Activated naive CD8-positive, alpha-beta T cell treated with anti-CD3 and anti-CD28 coated beads, Interleukin-2, amount 10 ng/mL, durations not matched to agents 7 days and 5 days (primary cell): ENCODE measurements at regions of chr1 and their contacts with region 1.

Region 1: DNA sequence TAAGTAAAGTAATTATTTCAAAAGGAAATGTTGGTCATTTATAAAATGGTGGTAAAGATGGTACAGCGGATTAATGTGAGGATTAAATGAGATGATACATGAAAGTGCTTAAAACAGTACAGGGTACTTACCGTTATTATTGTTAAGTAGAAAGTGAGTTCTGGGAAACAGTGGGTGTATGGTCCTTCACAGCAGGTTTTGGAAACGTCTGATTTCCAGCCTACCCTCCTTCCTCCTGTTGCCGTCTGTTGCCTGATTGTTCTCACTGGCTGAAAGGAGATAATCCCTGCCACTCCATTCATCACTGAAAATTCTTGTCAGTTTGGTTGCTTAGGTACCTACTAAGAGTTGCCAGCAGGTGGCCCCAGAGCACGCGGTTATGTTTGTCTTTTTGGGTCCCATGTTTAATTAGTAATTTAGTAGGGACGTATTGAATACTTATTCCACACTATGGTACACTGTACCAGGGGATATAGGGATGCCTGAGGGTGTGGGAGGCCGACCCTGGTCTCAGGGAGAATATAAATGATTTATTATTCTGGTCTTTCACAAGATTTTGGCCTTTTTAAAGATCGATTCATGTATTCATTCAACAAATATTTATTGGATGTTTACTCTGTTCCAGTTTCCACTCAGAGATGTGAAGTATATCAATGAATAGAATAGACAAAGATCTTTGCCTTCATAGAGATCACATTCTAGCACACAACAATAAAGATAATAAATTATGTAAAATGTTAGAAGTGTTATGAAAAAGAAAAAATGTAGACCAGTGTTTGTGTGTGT is 30.8 kb upstream of the RPTN start:
- DNase-seq: peak; percentile 67
- ATAC-seq: peak; percentile 47
- H3K4me3 Mint-ChIP-seq: peak overlapping the region; percentile 81
- H3K27ac Mint-ChIP-seq: no peak overlapping the region
- H3K4me1 Mint-ChIP-seq: peaks cover 11% of the 10 kb centered on the region
- H3K27me3 Mint-ChIP-seq: peaks cover 3% of the 10 kb centered on the region

Region 2: DNA sequence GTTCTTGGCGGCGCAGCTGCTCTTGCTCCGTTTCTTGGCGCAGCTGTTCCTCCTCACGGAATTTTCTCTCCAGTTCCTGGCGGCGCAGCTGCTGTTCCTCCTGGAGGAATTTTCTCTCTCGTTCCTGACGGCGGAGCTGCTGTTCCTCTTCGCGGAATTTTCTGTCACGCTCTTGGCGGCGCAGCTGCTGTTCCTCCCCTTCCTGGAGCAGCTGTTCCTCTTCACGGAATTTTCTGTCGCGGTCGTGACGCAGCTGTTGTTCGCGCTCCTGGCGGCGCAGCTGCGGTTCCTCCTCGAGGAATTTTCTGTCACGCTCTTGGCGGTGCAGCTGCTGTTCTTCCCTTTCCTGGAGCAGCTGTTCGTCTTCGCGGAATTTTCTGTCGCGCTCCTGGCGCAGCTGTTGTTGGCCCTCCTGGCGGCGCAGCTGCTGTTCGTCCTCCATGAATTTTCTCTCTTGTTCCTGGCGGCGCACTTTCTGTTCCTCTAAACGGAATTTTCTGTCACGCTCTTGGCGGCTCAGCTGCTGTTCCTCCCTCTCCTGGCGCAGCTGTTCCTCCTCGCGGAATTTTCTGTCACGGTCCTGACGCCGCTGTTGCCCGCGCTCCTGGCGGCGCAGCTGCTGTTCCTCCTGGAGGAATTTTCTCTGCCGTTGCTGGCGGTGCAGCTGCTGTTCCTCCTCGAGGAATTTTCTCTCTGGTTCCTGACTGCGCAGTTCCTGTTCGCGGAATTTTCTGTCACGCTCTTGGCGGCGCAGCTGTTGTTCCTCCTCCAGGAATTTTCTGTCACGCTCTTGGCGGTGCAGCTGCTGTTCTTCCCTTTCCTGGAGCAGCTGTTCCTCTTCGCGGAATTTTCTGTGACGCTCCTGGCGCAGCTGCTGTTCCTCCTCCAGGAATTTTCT is 81.6 kb before region 1 on chr1:
- POLR2A ChIA-PET with region 1: no interaction called
- DNase-seq: peak; percentile 29
- ATAC-seq: no peak
- H3K4me3 Mint-ChIP-seq: no peak overlapping the region
- H3K27ac Mint-ChIP-seq: peak overlapping the region; percentile 72
- H3K4me1 Mint-ChIP-seq: no peaks in the 10 kb centered on the region
- H3K27me3 Mint-ChIP-seq: peaks cover 19% of the 10 kb centered on the region

Region 3: DNA sequence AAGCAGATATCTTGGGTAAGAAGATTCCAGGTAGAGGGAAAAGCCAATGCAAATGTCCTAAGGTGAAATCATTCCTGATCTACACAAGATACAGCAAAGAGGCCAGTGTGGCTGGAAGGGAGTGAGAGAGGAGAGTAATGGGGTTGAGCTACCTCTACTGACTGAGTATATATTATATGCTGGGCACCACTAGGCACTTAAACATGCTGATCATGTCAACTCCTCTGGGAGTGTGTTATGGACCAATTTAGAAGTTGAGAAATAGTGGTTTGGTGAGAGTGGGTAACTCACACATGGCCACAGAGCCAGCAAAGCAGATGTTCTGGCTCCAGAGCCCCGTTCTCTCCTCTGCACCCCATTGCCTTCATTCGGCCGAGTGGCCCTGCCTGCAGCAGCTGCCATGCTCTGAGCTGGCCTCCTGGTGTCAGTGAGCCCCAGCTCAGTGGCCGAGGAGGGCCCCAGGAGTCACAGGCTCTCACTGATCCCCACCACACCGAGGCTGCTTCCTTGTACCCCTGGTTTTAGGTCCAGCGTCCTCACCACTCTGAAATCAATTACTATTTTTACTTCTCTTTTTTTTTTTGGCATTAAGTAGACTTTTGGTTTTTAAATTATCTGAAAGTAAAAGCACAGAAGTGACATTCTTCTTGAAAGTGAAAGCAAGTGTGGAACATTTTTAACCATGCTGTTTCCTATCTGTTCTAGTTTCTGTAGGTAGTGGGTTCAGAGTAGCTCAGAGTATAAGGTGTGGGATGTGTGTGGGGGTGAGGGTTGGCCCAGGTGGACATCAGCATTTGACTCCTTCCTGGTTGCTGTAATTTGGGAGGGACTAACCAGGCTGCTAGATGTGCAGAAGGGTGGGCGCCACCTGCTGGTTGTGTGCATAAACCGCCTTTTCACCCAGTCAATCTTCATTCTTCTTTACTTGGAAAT is 270.0 kb after region 1 on chr1:
- POLR2A ChIA-PET with region 1: interaction called, 22 read pairs
- DNase-seq: peak; percentile 80
- ATAC-seq: peak; percentile 80
- H3K4me3 Mint-ChIP-seq: peak overlapping the region; percentile 65
- H3K27ac Mint-ChIP-seq: peak overlapping the region; percentile 91
- H3K4me1 Mint-ChIP-seq: peaks cover 27% of the 10 kb centered on the region
- H3K27me3 Mint-ChIP-seq: peaks cover 6% of the 10 kb centered on the region